Mammary epithelial cell (primary cell): ENCODE measurements at regions of chr2 and their contacts with region 1.

Region 1: GRCh38 chr2:14480906-14481305 is 151.6 kb upstream of the LRATD1 start:
- DNase-seq: no peak
- H3K4me3 ChIP-seq: no peak overlapping the region
- H3K27ac ChIP-seq: no peak overlapping the region
- H3K4me1 ChIP-seq: no peaks in the 10 kb centered on the region
- H3K27me3 ChIP-seq: no peaks in the 10 kb centered on the region
- CTCF ChIP-seq: peak in 1 of 2 donors; percentile 22

Region 2: DNA sequence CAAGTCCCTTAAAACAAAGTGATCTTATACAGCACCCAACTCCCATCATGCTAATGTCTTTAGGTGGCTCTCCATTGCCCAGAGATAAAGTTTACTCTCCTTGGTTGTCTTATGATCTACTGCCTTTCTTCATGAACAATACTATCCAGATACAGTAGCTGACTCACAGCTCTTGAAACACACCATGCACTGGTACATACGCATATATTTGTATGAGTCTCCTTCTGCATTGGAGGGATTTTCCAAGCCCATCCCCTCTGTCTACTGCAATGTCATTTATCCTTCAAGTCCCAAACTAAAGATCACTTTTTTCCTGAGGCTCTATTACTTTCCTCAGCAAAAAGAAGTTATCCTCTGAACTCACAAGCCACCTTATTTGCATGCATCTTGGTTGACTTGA is 66.9 kb after region 1 on chr2:
- CTCF ChIA-PET with region 1: no interaction called
- dilution Hi-C with region 1: loop called (anchors 5 kb)
- in situ Hi-C with region 1: no loop called
- intact Hi-C with region 1: no loop called
- DNase-seq: no peak
- H3K4me3 ChIP-seq: no peak overlapping the region
- H3K27ac ChIP-seq: no peak overlapping the region
- H3K4me1 ChIP-seq: no peaks in the 10 kb centered on the region
- H3K27me3 ChIP-seq: no peaks in the 10 kb centered on the region
- CTCF ChIP-seq: no peak